Panc1 (cell line): ENCODE measurements at regions of chr3 and their contacts with region 1.

Region 1: DNA sequence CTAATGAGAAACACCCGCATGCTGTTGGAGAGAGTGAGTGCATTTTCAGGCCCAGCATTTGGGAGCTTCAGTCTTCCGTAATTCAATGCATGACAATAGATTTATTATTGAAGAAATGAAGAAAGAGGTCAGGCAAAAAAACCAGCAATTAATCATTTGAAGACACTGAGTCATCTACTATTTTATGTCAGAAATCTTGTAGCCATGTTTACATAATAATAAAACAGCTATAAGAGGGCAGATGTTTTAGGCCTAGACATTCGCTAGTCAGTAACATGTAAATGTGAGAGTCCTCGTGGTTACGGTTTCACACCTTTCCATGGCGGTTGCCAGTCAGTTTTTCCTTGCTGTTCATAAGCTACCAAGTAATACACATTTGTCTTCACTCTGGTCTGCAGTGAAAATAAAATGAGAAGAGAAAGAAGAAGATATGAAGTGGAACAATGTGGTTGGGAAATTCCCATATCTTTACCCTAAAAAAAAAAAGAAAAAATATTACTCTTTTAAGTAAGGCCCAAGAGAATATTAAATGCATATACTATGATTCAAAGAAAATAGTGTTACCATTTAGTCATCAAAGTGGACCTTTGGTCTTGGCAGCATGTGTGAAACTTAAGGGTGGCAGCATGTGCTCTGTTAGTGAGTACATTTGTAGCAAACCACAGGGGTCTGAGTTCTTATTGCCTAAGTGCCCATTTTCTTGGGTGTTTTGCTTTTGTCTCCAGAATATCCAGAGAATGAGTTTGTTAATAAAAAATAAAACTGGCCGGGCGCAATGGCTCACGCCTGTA is 140.5 kb upstream of the TBL1XR1 start:
- DNase-seq: no peak
- ATAC-seq: no peak
- H3K4me3 ChIP-seq: no peak overlapping the region
- H3K27ac ChIP-seq: peak overlapping the region; percentile 74; the same call in 1 of the 2 replicates
- H3K4me1 ChIP-seq: no peaks in the 10 kb centered on the region
- H3K27me3 ChIP-seq: no peaks in the 10 kb centered on the region
- CTCF ChIP-seq: no peak

Region 2: GRCh38 chr3:177284383-177284881 is 53.3 kb before region 1 on chr3:
- CTCF ChIA-PET with region 1: no interaction called
- POLR2A ChIA-PET with region 1: no interaction called
- in situ Hi-C with region 1: no loop called
- intact Hi-C with region 1: loop called (anchors 10 kb)
- DNase-seq: no peak
- ATAC-seq: peak; percentile 40; the same call in 1 of the 2 replicates
- H3K4me3 ChIP-seq: no peak overlapping the region
- H3K27ac ChIP-seq: peak overlapping the region; percentile 65; the same call in 1 of the 2 replicates
- H3K4me1 ChIP-seq: peaks cover 12% of the 10 kb centered on the region; the same call in 1 of the 2 replicates
- H3K27me3 ChIP-seq: no peaks in the 10 kb centered on the region
- CTCF ChIP-seq: no peak